Activated naive CD4-positive, alpha-beta T cell treated with anti-CD3 and anti-CD28 coated beads, Interleukin-2, amount 10 ng/mL, durations not matched to agents 7 days and 5 days (primary cell): ENCODE measurements at regions of chr19 and their contacts with region 1.

Region 1: GRCh38 chr19:17260842-17261325 is 3.7 kb downstream of the USHBP1 start:
- DNase-seq: peak; percentile 93
- H3K4me3 Mint-ChIP-seq: no peak overlapping the region
- H3K27ac Mint-ChIP-seq: peak overlapping the region; percentile 5
- H3K4me1 Mint-ChIP-seq: peaks cover 21% of the 10 kb centered on the region
- H3K27me3 Mint-ChIP-seq: peaks cover 14% of the 10 kb centered on the region

Region 2: DNA sequence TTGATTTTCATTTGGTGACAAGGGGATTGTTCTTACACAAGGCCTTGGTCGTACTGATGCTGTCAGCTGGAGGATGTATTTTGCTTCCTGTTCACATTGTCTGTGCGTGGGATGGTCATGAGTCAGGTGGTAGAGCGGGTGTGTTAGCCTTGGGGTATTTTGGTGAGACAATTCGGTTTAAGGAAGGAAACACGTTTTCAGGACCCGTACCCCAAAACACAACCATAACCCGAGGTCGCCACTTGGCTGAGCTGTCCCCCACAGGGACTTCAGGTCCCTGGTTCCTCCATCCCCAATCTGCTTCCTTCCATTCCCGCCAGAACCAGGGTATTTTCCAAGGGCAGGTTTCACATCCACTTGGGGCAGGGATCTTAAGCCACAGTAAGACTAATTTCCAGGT is 170.3 kb before region 1 on chr19:
- CTCF ChIA-PET with region 1: no interaction called
- DNase-seq: no peak
- H3K4me3 Mint-ChIP-seq: no peak overlapping the region
- H3K27ac Mint-ChIP-seq: peak overlapping the region; percentile 43
- H3K4me1 Mint-ChIP-seq: peaks cover 43% of the 10 kb centered on the region
- H3K27me3 Mint-ChIP-seq: no peaks in the 10 kb centered on the region

Region 3: DNA sequence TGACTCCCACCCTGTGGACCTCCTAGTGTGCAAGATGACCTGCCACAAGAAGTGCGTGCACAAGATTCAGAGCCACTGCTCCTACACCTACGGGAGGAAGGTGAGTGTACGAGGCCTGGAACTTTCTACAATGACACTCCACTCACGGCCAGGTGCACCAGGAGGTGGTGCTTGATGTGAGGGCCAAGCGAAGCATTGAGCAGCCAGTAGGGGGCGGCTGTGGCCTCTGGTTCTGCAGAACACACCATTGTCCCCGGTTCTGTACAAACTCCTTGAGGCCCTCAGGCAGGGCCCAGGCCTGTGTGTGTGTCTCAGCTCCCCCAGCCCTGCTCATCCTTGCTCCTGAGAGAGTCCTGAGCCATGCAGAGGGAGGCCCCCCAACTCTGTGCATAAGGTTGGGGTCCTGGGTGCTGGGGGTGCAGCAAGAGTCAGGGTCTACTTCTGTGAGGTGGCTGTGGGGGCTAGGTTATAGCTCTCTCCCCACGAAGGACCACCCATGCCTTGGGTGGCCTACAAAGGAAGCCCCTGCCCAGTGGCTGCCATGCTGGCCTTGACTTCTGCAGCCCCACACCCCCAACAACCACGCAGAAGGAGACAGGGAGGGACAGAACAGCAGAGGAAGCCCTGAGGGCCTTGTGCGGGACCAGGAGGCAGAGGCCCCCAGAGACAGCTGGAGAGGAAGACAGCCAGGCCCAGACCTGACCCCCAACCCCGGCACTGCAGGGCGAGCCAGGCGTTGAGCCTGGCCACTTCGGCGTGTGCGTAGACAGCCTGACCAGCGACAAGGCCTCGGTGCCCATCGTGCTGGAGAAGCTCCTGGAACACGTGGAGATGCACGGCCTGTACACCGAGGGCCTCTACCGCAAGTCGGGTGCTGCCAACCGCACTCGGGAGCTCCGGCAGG is 55.4 kb before region 1 on chr19:
- CTCF ChIA-PET with region 1: no interaction called
- DNase-seq: peak; percentile 78
- H3K4me3 Mint-ChIP-seq: no peak overlapping the region
- H3K27ac Mint-ChIP-seq: peak overlapping the region; percentile 24
- H3K4me1 Mint-ChIP-seq: peaks cover 14% of the 10 kb centered on the region
- H3K27me3 Mint-ChIP-seq: no peaks in the 10 kb centered on the region

Region 4: GRCh38 chr19:17248011-17248776 is 12.7 kb before region 1 on chr19:
- CTCF ChIA-PET with region 1: interaction called, 12 read pairs
- DNase-seq: no peak
- H3K4me3 Mint-ChIP-seq: no peak overlapping the region
- H3K27ac Mint-ChIP-seq: no peak overlapping the region
- H3K4me1 Mint-ChIP-seq: peaks cover 8% of the 10 kb centered on the region
- H3K27me3 Mint-ChIP-seq: peaks cover 58% of the 10 kb centered on the region

Region 5: DNA sequence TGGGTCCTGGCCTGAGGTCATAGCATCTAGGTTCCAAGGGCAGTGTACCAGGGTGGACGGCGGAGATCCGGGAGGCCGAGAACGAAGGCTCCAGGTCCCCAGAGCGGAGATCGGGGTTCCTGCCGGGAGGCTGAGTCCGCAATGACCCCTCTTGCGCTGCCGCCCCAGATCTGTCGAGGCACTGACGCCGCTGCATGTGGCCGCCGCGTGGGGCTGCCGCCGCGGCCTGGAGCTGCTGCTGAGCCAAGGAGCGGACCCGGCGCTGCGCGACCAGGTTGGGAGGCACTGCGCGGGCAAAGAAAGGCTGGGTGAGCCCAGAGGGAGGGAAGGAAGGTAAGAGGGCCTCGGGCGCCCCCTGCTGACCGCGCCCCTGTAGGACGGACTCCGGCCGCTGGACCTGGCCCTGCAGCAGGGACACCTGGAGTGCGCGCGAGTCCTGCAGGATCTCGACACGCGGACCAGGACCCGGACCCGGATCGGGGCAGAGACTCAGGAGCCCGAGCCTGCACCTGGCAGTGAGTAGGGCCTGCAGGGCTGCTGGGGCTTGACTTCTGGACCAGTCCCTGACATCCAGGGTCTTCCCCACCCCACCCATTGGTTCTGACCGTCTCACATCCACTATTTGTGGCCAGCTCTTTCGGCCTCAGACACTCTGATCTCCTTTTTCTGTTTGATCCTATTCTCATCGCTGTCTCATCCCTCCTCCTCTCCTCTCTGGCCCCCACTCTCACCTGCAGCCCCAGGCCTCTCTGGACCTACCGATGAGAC is 21.8 kb after region 1 on chr19:
- CTCF ChIA-PET with region 1: interaction called, 15 read pairs
- DNase-seq: peak; percentile 89
- H3K4me3 Mint-ChIP-seq: peak overlapping the region; percentile 83
- H3K27ac Mint-ChIP-seq: peak overlapping the region; percentile 58
- H3K4me1 Mint-ChIP-seq: peaks cover 7% of the 10 kb centered on the region
- H3K27me3 Mint-ChIP-seq: no peaks in the 10 kb centered on the region